ENCODE measurements at regions of chr3 and their contacts with region 1.

Region 1: DNA sequence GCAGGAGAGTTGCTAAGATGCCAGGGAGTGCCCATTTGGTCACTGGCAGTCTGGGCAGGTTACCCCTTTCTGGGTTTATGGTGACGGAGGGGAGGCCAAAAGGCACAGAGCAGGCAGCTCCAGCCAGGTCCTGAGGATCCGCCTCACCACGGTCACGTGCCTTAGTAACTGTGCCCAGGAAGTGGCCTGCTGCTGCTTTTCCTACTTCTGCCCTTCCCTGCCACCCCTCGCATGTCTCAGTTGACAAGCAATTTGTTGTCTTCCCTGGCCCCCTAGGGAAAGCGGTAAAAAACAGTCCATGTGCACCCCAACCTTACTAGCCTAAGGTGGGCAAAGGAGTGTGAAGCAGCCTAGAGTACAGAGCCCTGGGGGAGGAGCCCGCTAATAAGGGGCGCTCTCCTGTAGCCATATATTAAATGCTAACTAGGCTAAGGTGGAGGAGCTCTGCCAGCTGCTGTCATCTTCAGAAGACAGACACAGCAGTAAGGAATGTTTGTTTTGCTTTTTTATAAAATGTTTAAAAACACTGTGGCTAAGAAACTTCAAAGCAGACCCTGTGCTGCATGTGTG is 9.1 kb upstream of the LIPH start:
- DNase-seq: no peak
- ATAC-seq: no peak
- H3K4me3 ChIP-seq: no peak overlapping the region
- H3K27ac ChIP-seq: no peak overlapping the region
- H3K4me1 ChIP-seq: peaks cover 14% of the 10 kb centered on the region
- CTCF ChIP-seq: no peak
- EP300 ChIP-seq: no peak
- POLR2A ChIP-seq: no peak
- RAD21 ChIP-seq: no peak

Region 2: DNA sequence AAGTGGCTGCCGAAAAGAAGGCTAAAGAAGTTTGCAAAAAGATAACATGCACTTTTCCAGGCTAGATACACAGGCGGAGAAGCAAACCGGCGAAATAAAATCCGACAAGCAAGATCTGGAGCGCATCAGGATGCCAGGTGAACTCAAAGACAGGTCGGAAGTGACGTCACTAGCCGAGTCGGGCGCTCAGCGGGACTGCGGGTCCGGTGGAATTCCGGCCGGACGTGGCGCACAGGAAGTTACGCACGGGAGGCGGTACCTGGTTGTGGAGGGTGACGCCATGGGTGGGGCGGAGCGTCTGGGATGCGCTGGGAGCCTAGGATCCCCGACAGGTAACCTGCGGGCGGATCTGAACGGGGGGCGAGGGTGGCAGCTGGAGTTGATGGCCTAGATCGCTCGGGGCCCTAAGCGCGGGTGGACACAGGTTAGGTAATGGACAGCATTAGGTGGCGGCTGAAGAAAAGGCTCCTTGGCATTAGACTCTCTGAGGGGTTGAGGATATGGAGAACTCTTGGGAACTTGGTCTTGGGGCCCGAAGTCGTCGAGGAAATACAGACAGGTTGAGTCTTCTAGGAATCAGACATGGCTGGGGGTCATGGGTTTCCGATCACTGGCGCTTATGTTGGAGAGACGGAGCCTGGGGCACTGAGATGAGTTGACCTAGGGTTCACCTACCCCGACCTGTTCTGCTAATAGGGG is 278.6 kb before region 1 on chr3:
- CTCF ChIA-PET with region 1: no interaction called
- POLR2A ChIA-PET with region 1: no interaction called
- DNase-seq: peak; percentile 87 to 94
- ATAC-seq: peak; percentile 99 to 100
- H3K4me3 ChIP-seq: peak overlapping the region; percentile 59
- H3K27ac ChIP-seq: peak overlapping the region; percentile 67 to 86
- H3K4me1 ChIP-seq: 0 out of 3 replicates have a peak, but pooled peaks cover 5% of the 10 kb centered on the region
- CTCF ChIP-seq: no peak
- EP300 ChIP-seq: no peak
- POLR2A ChIP-seq: peak; percentile 58
- RAD21 ChIP-seq: no peak

Region 3: DNA sequence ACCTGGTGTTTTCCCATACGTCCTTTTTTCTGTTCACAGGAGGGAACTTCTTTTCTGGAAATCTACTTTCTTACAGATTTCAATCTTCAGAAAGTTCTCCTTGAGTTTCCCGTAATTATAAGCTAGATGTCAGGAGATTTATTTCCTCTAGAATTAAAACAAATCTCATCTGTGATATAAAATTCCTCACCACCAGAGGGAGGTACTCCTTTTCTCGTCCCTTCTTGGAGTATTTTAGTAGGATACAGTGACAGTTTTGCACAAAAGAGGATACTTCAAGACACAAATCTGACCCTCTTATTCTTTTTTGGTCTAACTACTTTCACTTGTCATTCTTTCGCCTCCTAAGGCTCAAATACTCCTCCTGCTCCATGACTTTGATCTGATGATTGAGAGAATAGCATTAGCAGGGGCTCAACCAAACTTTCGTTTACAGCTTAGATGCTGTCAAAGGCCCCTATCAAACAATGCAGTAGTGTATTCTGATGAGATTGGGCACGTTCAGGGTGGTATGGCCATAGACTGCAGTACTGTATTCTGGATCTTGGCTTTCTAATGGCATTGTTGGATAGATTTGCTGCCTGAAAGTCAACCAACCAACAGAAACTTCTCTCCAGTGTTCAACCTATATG is 100.6 kb before region 1 on chr3:
- CTCF ChIA-PET with region 1: interaction called, 35 read pairs
- POLR2A ChIA-PET with region 1: no interaction called
- DNase-seq: peak; percentile 21 to 26
- ATAC-seq: peak in 1 of 2 experiments; percentile 55; a peak in 2 of 6 replicates
- H3K4me3 ChIP-seq: no peak overlapping the region
- H3K27ac ChIP-seq: no peak overlapping the region
- H3K4me1 ChIP-seq: no peaks in the 10 kb centered on the region
- CTCF ChIP-seq: peak; percentile 50
- EP300 ChIP-seq: no peak
- POLR2A ChIP-seq: no peak
- RAD21 ChIP-seq: peak; percentile 52 to 53; a peak in 4 of 5 replicates

Region 4: GRCh38 chr3:185469542-185469941 is 91.9 kb before region 1 on chr3:
- CTCF ChIA-PET with region 1: interaction called, 13 read pairs
- POLR2A ChIA-PET with region 1: no interaction called
- DNase-seq: no peak
- ATAC-seq: no peak
- H3K4me3 ChIP-seq: no peak overlapping the region
- H3K27ac ChIP-seq: no peak overlapping the region
- H3K4me1 ChIP-seq: no peaks in the 10 kb centered on the region
- CTCF ChIP-seq: no peak
- EP300 ChIP-seq: no peak
- POLR2A ChIP-seq: no peak
- RAD21 ChIP-seq: no peak

Region 5: GRCh38 chr3:185528532-185528931 is 32.9 kb before region 1 on chr3:
- CTCF ChIA-PET with region 1: interaction called, 19 read pairs
- POLR2A ChIA-PET with region 1: no interaction called
- DNase-seq: no peak
- ATAC-seq: no peak
- H3K4me3 ChIP-seq: no peak overlapping the region
- H3K27ac ChIP-seq: no peak overlapping the region
- H3K4me1 ChIP-seq: peaks cover 6% of the 10 kb centered on the region; the same call in 1 of the 3 replicates
- CTCF ChIP-seq: no peak
- EP300 ChIP-seq: no peak
- POLR2A ChIP-seq: no peak
- RAD21 ChIP-seq: no peak

Region 6: GRCh38 chr3:185789891-185790830 is 228.7 kb after region 1 on chr3:
- CTCF ChIA-PET with region 1: no interaction called
- POLR2A ChIA-PET with region 1: no interaction called
- DNase-seq: no peak
- ATAC-seq: no peak
- H3K4me3 ChIP-seq: no peak overlapping the region
- H3K27ac ChIP-seq: no peak overlapping the region
- H3K4me1 ChIP-seq: no peaks in the 10 kb centered on the region
- CTCF ChIP-seq: no peak
- EP300 ChIP-seq: no peak
- POLR2A ChIP-seq: no peak
- RAD21 ChIP-seq: no peak

Measured in A549 (cell line).